Esophagus squamous epithelium (tissue), 5 donors: ENCODE measurements at regions of chr11 and their contacts with region 1.

Region 1: GRCh38 chr11:113113801-113114706 is 152.8 kb downstream of the NCAM1 start:
- DNase-seq: no peak
- H3K4me3 ChIP-seq: no peak overlapping the region
- H3K27ac ChIP-seq: peak overlapping the region in 3 of 4 donors; percentile 18 to 38 (median 21)
- H3K4me1 ChIP-seq: peaks cover 0 to 14% (median 0%) of the 10 kb centered on the region in 3 donors
- H3K27me3 ChIP-seq: no peaks in the 10 kb centered on the region
- CTCF ChIP-seq: peak; percentile 25 to 78 (median 70)
- POLR2A ChIP-seq: no peak

Region 2: DNA sequence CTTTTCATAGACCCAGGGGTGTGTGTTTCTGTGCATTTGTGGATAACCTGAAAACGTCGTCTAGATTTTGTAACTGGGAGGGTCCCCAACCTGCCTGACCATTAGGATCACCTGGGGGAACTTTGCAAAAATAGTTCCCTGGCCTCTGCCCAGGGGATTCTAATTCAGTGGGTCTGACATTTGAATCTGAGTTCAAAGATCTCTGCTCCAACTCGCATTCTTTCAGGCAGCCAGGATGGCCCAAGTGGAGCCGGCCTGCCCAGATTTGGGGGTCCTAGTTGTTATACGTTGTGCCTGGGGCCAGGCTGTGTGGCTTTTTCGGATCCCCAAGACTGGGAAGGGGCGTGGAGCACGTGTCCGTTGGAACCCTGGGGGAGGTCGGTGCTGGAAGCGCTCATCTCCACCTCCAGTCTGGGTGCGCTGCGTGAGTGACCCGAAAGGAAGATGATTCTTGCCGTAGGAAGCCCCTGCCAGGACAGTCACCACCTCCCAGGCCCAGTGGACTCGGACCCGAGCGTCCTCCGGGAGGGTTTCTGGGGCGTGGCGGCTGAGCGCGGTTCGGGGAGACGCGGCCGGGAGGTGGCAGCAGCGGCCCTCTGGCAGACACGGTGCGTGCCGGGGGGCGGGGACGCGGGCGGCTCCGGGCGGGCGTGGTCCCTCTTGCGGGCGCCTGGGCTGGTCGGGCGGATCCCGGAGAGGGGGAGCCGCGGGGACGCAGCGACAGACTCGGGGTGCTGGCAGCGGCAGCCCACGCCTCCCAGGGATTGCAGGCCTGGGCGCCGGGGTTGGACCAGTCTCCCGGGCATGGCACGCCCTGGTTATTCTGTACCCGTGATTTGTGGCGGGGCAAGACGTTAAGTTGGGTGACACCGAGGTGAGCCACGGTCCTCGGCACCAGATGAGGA is 824.2 kb before region 1 on chr11:
- intact Hi-C with region 1: loop called (anchors 10 kb)
- DNase-seq: no peak
- H3K4me3 ChIP-seq: peak overlapping the region; percentile 33 to 80 (median 54)
- H3K27ac ChIP-seq: peak overlapping the region; percentile 77 to 88 (median 82)
- H3K4me1 ChIP-seq: peaks cover 15 to 48% (median 26%) of the 10 kb centered on the region in 3 donors
- H3K27me3 ChIP-seq: no peaks in the 10 kb centered on the region
- CTCF ChIP-seq: peak; percentile 79 to 96 (median 87)
- POLR2A ChIP-seq: peak in 2 of 4 donors; percentile 13 to 61

Region 3: DNA sequence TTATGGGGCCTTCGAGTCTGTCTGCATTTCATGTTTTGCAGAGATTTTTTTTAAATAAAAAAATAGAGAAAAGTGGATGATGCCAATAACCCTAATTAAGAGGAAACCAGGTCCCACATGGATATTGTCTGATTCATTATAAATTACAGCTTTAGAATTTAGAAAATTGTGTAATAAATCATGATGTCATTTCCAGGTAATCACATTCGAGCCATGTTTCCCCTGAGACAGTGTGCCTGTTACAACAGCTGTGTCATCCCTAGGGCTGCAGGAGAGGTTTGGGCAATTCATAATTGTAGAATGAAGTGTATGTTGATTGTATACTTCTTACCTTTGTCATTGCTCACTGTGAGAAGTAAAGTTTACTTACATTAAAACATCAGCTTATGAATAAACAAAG is 114.5 kb before region 1 on chr11:
- intact Hi-C with region 1: no loop called
- DNase-seq: no peak
- H3K4me3 ChIP-seq: no peak overlapping the region
- H3K27ac ChIP-seq: no peak overlapping the region
- H3K4me1 ChIP-seq: no peaks in the 10 kb centered on the region
- H3K27me3 ChIP-seq: no peaks in the 10 kb centered on the region
- CTCF ChIP-seq: no peak
- POLR2A ChIP-seq: no peak